GM13976 (cell line): ENCODE measurements at regions of chrX and their contacts with region 1.

Region 1: GRCh38 chrX:120468825-120469525 is at the start of gene LAMP2:
- DNase-seq: peak; percentile 84
- CTCF ChIP-seq: no peak

Region 2: DNA sequence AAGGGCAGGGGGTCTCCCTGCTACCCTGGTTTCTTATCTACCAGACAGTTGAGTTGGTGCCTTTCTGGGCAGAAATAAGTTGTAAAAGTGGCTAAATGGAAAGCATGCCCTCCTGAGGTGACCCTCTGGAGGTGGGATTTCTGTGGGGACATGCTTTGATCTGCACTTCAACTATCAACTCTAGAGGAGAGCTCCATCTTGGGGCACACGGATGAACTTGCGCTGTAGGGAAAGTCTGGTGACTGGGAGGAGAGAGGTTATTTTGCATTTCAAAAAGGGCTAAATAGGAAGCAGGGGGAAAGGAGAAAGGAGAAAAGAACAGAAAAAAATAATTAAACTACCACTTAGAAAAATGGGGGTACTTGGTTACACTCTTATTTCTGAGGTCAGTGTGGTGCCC is 378.8 kb before region 1 on chrX:
- in situ Hi-C with region 1: loop called (anchors 25 kb)
- DNase-seq: no peak
- CTCF ChIP-seq: no peak

Region 3: DNA sequence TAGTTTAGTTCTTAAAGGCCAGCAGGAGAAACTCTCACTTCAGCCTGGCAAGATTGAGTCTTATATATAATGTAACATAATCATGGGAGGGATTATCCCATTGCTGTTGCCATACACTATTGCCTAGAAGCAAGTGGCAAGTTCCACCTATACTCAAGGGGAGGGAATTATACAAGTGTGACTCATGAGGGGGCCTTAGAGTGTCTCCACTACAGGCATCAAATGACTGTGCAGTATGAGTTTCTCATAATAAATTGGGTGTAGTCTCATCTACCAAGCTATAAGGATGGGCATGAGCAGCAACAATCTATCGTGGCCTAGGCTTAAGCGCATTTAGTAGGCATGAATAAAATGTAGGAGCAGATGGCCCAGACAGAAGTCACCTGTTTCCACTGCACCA is 250.0 kb after region 1 on chrX:
- in situ Hi-C with region 1: no loop called
- DNase-seq: no peak
- CTCF ChIP-seq: no peak